PC-9 (cell line): ENCODE measurements at regions of chr10 and their contacts with region 1.

Region 1: GRCh38 chr10:34776090-34776690 is 38.9 kb downstream of the PARD3 start:
- DNase-seq: no peak
- H3K4me3 ChIP-seq: no peak overlapping the region
- H3K27ac ChIP-seq: no peak overlapping the region
- H3K4me1 ChIP-seq: no peaks in the 10 kb centered on the region; the same call in 1 of the 2 replicates
- H3K27me3 ChIP-seq: no peaks in the 10 kb centered on the region
- CTCF ChIP-seq: no peak

Region 2: DNA sequence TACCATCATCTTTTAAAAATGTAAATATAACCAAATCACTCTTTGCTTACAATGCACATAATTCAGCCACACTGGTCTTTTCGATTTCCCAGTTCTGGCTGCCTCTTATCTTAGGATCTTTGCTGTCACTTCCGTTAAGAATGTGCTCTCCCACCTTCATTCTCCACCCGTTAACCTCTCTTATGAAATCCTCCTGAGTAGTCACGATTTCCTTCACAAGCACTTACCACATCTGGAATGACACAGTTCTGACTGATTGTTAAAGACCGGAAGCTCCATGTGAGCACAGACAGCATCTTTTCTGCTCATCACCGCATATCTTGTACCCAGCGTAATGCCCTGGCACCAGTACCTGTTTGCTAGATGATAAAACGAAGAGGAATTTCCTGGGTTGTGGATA is 229.7 kb after region 1 on chr10:
- CTCF ChIA-PET with region 1: interaction called, 12 read pairs
- POLR2A ChIA-PET with region 1: interaction called, 16 read pairs
- intact Hi-C with region 1: no loop called
- DNase-seq: peak; percentile 66 to 92
- H3K4me3 ChIP-seq: no peak overlapping the region
- H3K27ac ChIP-seq: peak overlapping the region; percentile 52; the same call in 1 of the 2 replicates
- H3K4me1 ChIP-seq: peaks cover 19% of the 10 kb centered on the region
- H3K27me3 ChIP-seq: no peaks in the 10 kb centered on the region
- CTCF ChIP-seq: no peak